Sigmoid colon (tissue), 7 donors: ENCODE measurements at regions of chr5 and their contacts with region 1.

Region 1: GRCh38 chr5:72955768-72956323 is at the start of gene FCHO2:
- DNase-seq: peak; percentile 99
- H3K4me3 ChIP-seq: peak within 1 kb of the TSS; percentile 84 to 92 (median 86)
- H3K27ac ChIP-seq: peak within 1 kb of the TSS; percentile 92 to 98 (median 98)
- H3K4me1 ChIP-seq: peaks cover 0 to 52% (median 31%) of the 10 kb centered on the region in 4 donors
- H3K27me3 ChIP-seq: no peaks in the 10 kb centered on the region
- CTCF ChIP-seq: peak; percentile 82 to 86 (median 84)
- EP300 ChIP-seq: no peak
- POLR2A ChIP-seq: peak; percentile 44 to 51
- total RNA-seq, gene FCHO2: 36.0 to 40.3 (median 38.3) TPM

Region 2: GRCh38 chr5:72847989-72848473 is 107.8 kb before region 1 on chr5:
- intact Hi-C with region 1: loop called (anchors 5 kb)
- DNase-seq: peak; percentile 93
- H3K4me3 ChIP-seq: peak overlapping the region; percentile 67 to 92 (median 77)
- H3K27ac ChIP-seq: peak overlapping the region; percentile 92 to 95 (median 94)
- H3K4me1 ChIP-seq: peaks cover 0 to 66% (median 46%) of the 10 kb centered on the region in 4 donors
- H3K27me3 ChIP-seq: no peaks in the 10 kb centered on the region
- CTCF ChIP-seq: no peak
- EP300 ChIP-seq: no peak
- POLR2A ChIP-seq: peak; percentile 90 to 93

Region 3: DNA sequence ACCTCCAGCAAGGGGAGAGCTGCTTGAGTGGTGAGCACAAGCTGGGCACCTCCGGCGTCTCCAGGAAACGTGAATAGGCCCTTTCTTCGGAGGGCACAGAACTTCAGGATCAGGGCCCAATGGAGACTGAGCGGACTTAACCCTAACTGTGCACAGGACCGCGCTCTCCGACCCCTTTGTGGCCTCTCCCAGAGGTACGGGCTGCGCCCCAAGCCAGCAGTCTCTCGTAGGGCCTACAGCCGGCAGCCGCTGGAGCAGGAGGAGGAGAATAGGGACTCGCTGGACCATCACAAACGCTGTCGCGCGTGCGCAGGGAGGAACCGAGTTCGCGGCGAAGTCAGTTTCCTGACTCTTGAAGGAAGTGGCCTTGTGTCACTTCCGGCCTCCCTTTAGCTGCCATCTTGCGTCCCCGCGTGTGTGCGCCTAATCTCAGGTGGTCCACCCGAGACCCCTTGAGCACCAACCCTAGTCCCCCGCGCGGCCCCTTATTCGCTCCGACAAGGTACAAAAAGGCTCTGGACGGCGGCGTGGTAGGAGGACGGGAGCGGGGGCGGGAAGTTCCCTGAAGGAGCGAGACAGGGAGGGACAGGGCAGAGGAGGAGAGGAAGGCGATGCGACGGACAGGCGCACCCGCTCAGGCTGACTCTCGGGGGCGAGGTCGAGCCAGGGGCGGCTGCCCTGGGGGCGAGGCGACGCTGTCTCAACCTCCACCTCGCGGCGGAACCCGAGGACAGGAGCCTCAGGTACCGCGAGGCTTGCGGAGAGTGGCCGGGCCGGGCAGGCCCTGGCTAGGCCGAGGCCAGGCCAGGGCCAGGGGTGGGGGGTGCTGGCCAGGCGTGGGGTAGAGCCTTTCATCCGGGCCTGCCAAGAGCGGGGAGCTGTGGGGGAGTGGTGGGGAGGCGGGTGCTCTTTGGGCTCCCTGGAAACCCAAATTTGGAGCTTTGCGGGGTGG is 542.5 kb after region 1 on chr5 and contains the start of gene BTF3:
- intact Hi-C with region 1: loop called (anchors 5 kb)
- DNase-seq: peak; percentile 97
- H3K4me3 ChIP-seq: peak within 1 kb of the TSS; percentile 64 to 99 (median 88)
- H3K27ac ChIP-seq: peak within 1 kb of the TSS; percentile 87 to 97 (median 92)
- H3K4me1 ChIP-seq: peaks cover 0 to 29% (median 24%) of the 10 kb centered on the region in 4 donors
- H3K27me3 ChIP-seq: no peaks in the 10 kb centered on the region
- CTCF ChIP-seq: no peak
- EP300 ChIP-seq: no peak
- POLR2A ChIP-seq: peak; percentile 66 to 72
- total RNA-seq, gene BTF3: 490 to 780 (median 726) TPM